IMR-90 (cell line): ENCODE measurements at regions of chr6 and their contacts with region 1.

Region 1: GRCh38 chr6:75397656-75398465 is 95.7 kb downstream of the FILIP1 start:
- DNase-seq: peak; percentile 62
- ATAC-seq: peak; percentile 79
- H3K4me3 ChIP-seq: no peak overlapping the region
- H3K27ac ChIP-seq: peak overlapping the region; percentile 44; the same call in 1 of the 2 replicates
- H3K4me1 ChIP-seq: peaks cover 2% of the 10 kb centered on the region
- H3K27me3 ChIP-seq: no peaks in the 10 kb centered on the region
- CTCF ChIP-seq: no peak
- POLR2A ChIP-seq: no peak
- RAD21 ChIP-seq: no peak

Region 2: DNA sequence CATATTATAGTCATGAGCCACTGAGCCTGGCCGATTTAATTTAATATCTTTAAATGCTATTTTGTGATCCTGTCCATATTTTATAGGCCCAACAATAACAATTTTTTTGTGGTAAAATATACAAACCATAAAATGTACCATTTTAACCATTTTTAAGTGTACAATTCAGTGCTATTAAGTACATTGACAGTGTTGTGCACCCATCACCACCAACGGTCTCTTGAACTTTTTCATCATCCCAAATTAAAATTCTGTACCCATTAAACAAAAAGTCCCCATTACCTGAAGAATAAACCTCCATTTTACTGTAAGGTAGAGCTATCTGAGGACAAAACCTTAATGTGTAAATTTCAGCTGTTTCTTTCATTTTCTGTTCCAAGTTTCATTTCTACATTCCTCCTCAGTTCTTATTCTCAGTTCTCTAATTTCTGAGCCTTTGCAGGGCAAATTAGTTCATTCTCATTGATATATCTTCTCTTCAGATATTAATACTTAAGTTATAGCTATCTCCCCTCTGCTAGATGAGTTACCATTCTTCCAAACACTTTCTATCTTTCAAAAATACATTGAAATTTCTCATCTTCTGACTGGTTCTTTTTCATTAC is 1926.1 kb before region 1 on chr6:
- CTCF ChIA-PET with region 1: no interaction called
- POLR2A ChIA-PET with region 1: no interaction called
- dilution Hi-C with region 1: no loop called
- in situ Hi-C with region 1: no loop called
- intact Hi-C with region 1: no loop called
- DNase-seq: no peak
- ATAC-seq: no peak
- H3K4me3 ChIP-seq: no peak overlapping the region
- H3K27ac ChIP-seq: no peak overlapping the region
- H3K4me1 ChIP-seq: no peaks in the 10 kb centered on the region
- H3K27me3 ChIP-seq: no peaks in the 10 kb centered on the region
- CTCF ChIP-seq: no peak
- POLR2A ChIP-seq: no peak
- RAD21 ChIP-seq: no peak

Region 3: DNA sequence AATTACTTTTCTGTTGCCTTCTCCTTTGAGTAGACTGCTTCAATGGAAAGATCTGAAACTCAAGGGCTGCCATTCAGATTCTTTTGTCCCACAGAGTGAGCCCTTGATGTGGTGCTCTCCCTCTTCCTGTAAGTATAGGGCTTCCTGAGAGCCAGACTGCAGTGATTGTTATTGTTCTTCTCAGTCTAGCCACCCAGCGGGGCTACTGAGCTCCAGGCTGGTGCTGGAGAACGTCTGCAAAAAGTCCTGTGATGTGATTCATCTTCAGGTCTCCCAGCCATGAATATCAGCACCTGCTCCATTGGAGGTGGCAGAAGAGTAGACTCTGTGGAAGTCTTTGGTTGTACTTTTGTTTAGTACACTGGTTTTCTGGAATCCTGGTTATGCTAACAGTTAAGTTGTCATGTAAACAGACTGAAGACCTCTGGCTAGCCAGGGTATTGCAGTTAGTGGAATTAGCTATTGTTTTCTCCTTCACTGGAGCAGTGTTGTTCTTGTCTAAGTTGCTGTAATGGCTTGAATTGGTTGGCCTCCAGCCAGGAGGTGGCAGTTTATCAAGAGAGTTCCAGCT is 432.9 kb before region 1 on chr6:
- CTCF ChIA-PET with region 1: no interaction called
- POLR2A ChIA-PET with region 1: no interaction called
- dilution Hi-C with region 1: no loop called
- in situ Hi-C with region 1: no loop called
- intact Hi-C with region 1: no loop called
- DNase-seq: peak; percentile 57
- ATAC-seq: peak; percentile 75
- H3K4me3 ChIP-seq: no peak overlapping the region
- H3K27ac ChIP-seq: no peak overlapping the region
- H3K4me1 ChIP-seq: no peaks in the 10 kb centered on the region
- H3K27me3 ChIP-seq: no peaks in the 10 kb centered on the region
- CTCF ChIP-seq: no peak
- POLR2A ChIP-seq: no peak
- RAD21 ChIP-seq: no peak

Region 4: GRCh38 chr6:75306064-75306463 is 91.8 kb before region 1 on chr6:
- CTCF ChIA-PET with region 1: no interaction called
- POLR2A ChIA-PET with region 1: no interaction called
- dilution Hi-C with region 1: no loop called
- in situ Hi-C with region 1: no loop called
- intact Hi-C with region 1: loop called (anchors 5 kb)
- DNase-seq: peak; percentile 62
- ATAC-seq: no peak
- H3K4me3 ChIP-seq: no peak overlapping the region
- H3K27ac ChIP-seq: no peak overlapping the region
- H3K4me1 ChIP-seq: 0 out of 2 replicates have a peak, but pooled peaks cover 3% of the 10 kb centered on the region
- H3K27me3 ChIP-seq: no peaks in the 10 kb centered on the region; the same call in 1 of the 2 replicates
- CTCF ChIP-seq: no peak
- POLR2A ChIP-seq: no peak
- RAD21 ChIP-seq: no peak

Region 5: GRCh38 chr6:75351543-75351942 is 46.3 kb before region 1 on chr6:
- CTCF ChIA-PET with region 1: interaction called, 10 read pairs
- POLR2A ChIA-PET with region 1: no interaction called
- dilution Hi-C with region 1: no loop called
- in situ Hi-C with region 1: no loop called
- intact Hi-C with region 1: no loop called
- DNase-seq: no peak
- ATAC-seq: no peak
- H3K4me3 ChIP-seq: no peak overlapping the region
- H3K27ac ChIP-seq: no peak overlapping the region
- H3K4me1 ChIP-seq: no peaks in the 10 kb centered on the region; the same call in 1 of the 2 replicates
- H3K27me3 ChIP-seq: peaks cover 8% of the 10 kb centered on the region
- CTCF ChIP-seq: no peak
- POLR2A ChIP-seq: no peak
- RAD21 ChIP-seq: no peak